ENCODE measurements at regions of chr9 and their contacts with region 1.

Region 1: GRCh38 chr9:126398403-126399058 is 71.9 kb downstream of the MVB12B start:
- DNase-seq: peak; percentile 82
- H3K4me3 Mint-ChIP-seq: no peak overlapping the region
- H3K27ac Mint-ChIP-seq: no peak overlapping the region
- H3K4me1 Mint-ChIP-seq: peaks cover 42% of the 10 kb centered on the region
- H3K27me3 Mint-ChIP-seq: no peaks in the 10 kb centered on the region

Region 2: DNA sequence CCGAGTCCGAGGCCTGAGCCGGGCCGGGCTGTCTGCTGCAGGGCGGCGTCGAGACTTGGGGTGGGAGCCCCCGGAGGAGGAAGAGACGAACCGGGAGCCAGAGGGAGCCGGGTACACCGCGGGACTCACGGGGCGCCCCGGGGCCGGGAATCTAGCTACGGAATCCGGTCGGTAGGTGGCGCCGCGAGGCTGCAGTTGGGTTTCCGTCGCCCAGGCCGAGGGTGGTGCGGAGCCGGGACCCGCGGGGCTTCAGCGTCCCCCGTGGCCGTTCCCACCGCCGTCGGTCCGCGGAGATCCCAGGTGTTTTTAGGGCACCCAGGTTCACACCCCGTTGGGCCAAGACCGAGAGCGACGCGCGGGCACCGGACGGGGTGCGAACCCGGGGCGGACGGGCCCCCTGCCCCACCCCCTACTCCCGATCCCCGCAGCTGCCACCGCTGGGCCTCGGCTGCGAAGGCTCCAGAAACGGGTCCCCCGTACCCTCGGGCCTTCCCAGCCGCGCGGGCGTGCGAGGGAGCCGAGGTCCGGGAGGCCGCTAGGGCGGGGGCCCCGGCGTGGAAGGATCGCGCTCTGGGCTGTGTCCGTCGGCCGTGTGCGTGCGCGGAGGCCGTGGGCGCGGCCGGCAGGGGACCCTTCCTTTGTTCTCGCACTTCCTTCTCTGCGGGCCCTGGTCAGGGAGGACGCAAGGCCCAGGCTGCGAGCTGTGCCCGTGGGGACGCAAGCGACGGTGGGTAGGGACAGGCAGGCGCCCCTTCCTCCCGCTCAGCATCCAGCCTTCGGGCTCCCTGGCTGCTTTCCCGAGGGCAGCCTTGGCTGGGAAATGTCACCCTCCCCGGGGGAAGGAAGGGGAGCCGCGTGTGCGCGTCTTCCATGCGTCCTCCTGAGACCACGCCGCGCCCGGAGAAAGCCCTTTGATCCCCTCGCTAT is 990.3 kb before region 1 on chr9:
- CTCF ChIA-PET with region 1: interaction called, 4 read pairs
- intact Hi-C with region 1: loop called (anchors 5 kb)
- DNase-seq: peak; percentile 83
- H3K4me3 Mint-ChIP-seq: peak overlapping the region; percentile 66
- H3K27ac Mint-ChIP-seq: no peak overlapping the region
- H3K4me1 Mint-ChIP-seq: peaks cover 9% of the 10 kb centered on the region
- H3K27me3 Mint-ChIP-seq: peaks cover 23% of the 10 kb centered on the region

Region 3: GRCh38 chr9:125746017-125746773 is 652.3 kb before region 1 on chr9:
- CTCF ChIA-PET with region 1: no interaction called
- intact Hi-C with region 1: loop called (anchors 5 kb)
- DNase-seq: peak; percentile 93
- H3K4me3 Mint-ChIP-seq: peak overlapping the region; percentile 91
- H3K27ac Mint-ChIP-seq: peak overlapping the region; percentile 90
- H3K4me1 Mint-ChIP-seq: peaks cover 25% of the 10 kb centered on the region
- H3K27me3 Mint-ChIP-seq: peaks cover 6% of the 10 kb centered on the region

Region 4: DNA sequence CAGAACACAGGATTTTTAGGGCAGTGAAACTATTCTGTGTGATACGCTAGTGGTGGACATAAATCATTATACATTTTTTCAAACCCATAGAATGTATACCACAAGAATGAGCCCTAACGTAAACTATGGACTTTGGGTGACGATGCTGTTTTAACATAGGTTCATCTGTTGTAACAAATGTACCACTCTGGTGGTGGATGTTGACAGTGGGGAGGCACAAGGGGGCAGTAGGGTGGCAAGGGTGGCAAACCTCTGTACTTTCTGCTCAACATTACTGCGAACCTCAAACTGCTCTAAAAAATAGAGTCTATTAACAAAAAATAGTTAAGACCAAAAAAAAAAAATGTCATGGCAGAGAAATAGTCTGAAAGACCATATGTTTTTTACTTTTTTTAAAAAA is 81.0 kb before region 1 on chr9:
- CTCF ChIA-PET with region 1: interaction called, 22 read pairs
- intact Hi-C with region 1: no loop called
- DNase-seq: peak; percentile 45
- H3K4me3 Mint-ChIP-seq: no peak overlapping the region
- H3K27ac Mint-ChIP-seq: no peak overlapping the region
- H3K4me1 Mint-ChIP-seq: no peaks in the 10 kb centered on the region
- H3K27me3 Mint-ChIP-seq: no peaks in the 10 kb centered on the region

Region 5: GRCh38 chr9:126411225-126411947 is 12.9 kb after region 1 on chr9:
- CTCF ChIA-PET with region 1: interaction called, 5 read pairs
- intact Hi-C with region 1: loop called (anchors 1 kb)
- DNase-seq: peak; percentile 68
- H3K4me3 Mint-ChIP-seq: peak overlapping the region; percentile 35
- H3K27ac Mint-ChIP-seq: peak overlapping the region; percentile 72
- H3K4me1 Mint-ChIP-seq: peaks cover 33% of the 10 kb centered on the region
- H3K27me3 Mint-ChIP-seq: no peaks in the 10 kb centered on the region

Region 6: GRCh38 chr9:126425869-126426268 is 27.3 kb after region 1 on chr9:
- CTCF ChIA-PET with region 1: no interaction called
- intact Hi-C with region 1: no loop called
- DNase-seq: no peak
- H3K4me3 Mint-ChIP-seq: no peak overlapping the region
- H3K27ac Mint-ChIP-seq: no peak overlapping the region
- H3K4me1 Mint-ChIP-seq: peaks cover 21% of the 10 kb centered on the region
- H3K27me3 Mint-ChIP-seq: no peaks in the 10 kb centered on the region

Region 7: DNA sequence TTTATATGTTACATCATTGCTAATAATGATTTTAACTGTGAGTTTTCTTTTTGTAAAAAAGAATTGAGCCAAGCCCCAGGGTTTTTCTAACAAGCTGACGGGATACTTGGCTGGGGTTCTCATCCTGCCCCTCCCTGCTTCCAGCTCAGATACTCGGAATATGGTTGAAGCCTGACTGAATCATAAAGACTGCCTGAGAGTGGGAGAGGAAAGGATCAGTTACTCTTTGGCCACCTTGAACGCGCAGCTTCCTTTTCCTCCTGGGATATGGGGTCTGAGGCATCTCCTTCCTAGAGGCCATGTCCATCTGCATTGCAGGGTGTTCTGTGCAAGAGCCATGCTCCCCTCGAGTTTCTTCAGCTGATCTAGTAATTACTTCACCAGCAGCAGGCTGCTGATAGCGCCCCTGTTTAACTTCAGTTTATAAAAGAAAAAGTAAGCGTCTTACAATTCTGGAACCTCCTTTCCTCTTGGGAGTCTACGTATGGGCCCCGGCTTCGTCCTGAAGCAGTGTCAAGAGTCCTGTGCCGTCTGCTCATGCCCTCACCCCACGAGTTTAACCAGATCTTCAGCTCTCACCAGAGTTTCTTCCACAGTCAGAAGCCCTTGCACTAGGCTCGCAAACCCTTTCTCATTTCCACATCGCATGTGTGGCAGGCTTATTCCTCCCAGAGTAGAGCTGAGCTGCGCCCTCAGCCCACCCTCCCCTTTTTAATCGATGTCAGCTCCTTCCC is 58.1 kb after region 1 on chr9:
- CTCF ChIA-PET with region 1: no interaction called
- intact Hi-C with region 1: no loop called
- DNase-seq: no peak
- H3K4me3 Mint-ChIP-seq: no peak overlapping the region
- H3K27ac Mint-ChIP-seq: no peak overlapping the region
- H3K4me1 Mint-ChIP-seq: no peaks in the 10 kb centered on the region
- H3K27me3 Mint-ChIP-seq: no peaks in the 10 kb centered on the region